Activated CD8-positive, alpha-beta T cell treated with anti-CD3 and anti-CD28 coated beads, Interleukin-2, amount 10 ng/mL, durations not matched to agents 7 days and 5 days (primary cell): ENCODE measurements at regions of chr15 and their contacts with region 1.

Region 1: GRCh38 chr15:33737687-33738601 is 230.4 kb upstream of the CHRM5 start:
- DNase-seq: peak; percentile 44
- ATAC-seq: peak; percentile 53
- H3K4me3 Mint-ChIP-seq: no peak overlapping the region
- H3K27ac Mint-ChIP-seq: no peak overlapping the region
- H3K4me1 Mint-ChIP-seq: no peaks in the 10 kb centered on the region
- H3K27me3 Mint-ChIP-seq: peaks cover 4% of the 10 kb centered on the region

Region 2: GRCh38 chr15:33292717-33293307 is 445.1 kb before region 1 on chr15:
- CTCF ChIA-PET with region 1: interaction called, 10 read pairs
- POLR2A ChIA-PET with region 1: no interaction called
- DNase-seq: peak; percentile 58
- ATAC-seq: no peak
- H3K4me3 Mint-ChIP-seq: no peak overlapping the region
- H3K27ac Mint-ChIP-seq: no peak overlapping the region
- H3K4me1 Mint-ChIP-seq: no peaks in the 10 kb centered on the region
- H3K27me3 Mint-ChIP-seq: peaks cover 3% of the 10 kb centered on the region